Mammary epithelial cell (primary cell): ENCODE measurements at regions of chr5 and their contacts with region 1.

Region 1: DNA sequence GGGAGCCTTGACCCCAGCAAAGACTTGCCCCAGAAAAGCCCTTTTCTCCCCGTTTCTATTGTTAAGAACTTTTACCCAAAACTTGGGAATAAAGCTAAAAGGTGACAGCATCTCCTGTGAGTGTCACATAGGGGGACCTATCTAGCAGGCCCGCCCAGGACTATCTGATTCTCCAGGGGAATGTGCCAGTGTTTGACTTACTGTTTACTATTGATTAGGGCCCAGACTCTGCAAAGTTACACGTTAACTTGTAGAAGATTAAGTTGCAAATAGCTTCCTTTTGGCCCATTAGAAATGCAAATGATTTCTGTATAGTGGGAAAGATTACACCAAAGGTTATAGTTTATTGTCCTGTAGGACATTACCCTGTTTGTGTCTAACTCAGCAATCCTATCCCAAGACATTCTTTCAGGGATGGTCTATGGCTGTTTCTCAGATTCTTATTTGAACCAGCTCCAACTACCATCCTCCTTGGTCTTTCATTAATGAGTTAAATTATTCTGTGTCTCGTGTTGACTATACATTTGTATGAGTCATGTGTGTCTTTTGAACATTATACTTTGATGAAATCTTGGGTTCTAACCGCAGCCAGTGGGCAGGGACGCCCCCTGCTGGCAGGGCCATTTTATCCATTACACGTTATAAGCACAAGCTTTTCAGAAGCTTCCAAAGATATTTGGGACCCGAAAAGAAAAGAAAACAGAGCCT is 60.7 kb downstream of the HRH2 start:
- DNase-seq: peak; percentile 41
- H3K4me3 ChIP-seq: no peak overlapping the region
- H3K27ac ChIP-seq: no peak overlapping the region
- H3K4me1 ChIP-seq: no peaks in the 10 kb centered on the region
- H3K27me3 ChIP-seq: peaks cover 2% of the 10 kb centered on the region
- CTCF ChIP-seq: peak; percentile 44 to 73

Region 2: DNA sequence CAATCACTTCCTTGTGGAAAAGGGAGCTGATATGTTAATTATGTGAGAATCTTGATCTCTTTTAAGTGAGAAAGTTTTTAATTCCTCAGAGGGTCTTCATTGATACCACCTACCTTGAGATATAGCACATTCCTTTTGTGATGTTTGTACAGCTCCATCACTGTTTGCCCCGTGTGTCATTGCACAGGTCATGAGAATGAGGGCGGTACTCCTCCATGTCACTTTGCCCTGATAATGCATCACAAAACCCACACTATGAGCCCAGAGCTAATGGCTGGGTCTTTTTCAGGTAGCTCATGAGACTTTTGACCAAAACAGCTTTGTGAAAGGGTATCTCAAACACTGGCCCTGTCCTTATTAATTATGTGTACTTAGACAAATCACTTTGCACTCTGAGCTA is 418.4 kb before region 1 on chr5:
- CTCF ChIA-PET with region 1: no interaction called
- dilution Hi-C with region 1: no loop called
- in situ Hi-C with region 1: no loop called
- intact Hi-C with region 1: no loop called
- DNase-seq: no peak
- H3K4me3 ChIP-seq: no peak overlapping the region
- H3K27ac ChIP-seq: no peak overlapping the region
- H3K4me1 ChIP-seq: no peaks in the 10 kb centered on the region
- H3K27me3 ChIP-seq: no peaks in the 10 kb centered on the region
- CTCF ChIP-seq: no peak

Region 3: GRCh38 chr5:175534070-175534932 is 184.3 kb before region 1 on chr5:
- CTCF ChIA-PET with region 1: no interaction called
- dilution Hi-C with region 1: no loop called
- in situ Hi-C with region 1: loop called in 1 of 2 experiments (anchors 25 kb)
- intact Hi-C with region 1: loop called (anchors 2 kb)
- DNase-seq: peak; percentile 66
- H3K4me3 ChIP-seq: no peak overlapping the region
- H3K27ac ChIP-seq: no peak overlapping the region
- H3K4me1 ChIP-seq: no peaks in the 10 kb centered on the region
- H3K27me3 ChIP-seq: no peaks in the 10 kb centered on the region
- CTCF ChIP-seq: peak; percentile 97 to 100